AG04450 (cell line): ENCODE measurements at regions of chr13 and their contacts with region 1.

Region 1: DNA sequence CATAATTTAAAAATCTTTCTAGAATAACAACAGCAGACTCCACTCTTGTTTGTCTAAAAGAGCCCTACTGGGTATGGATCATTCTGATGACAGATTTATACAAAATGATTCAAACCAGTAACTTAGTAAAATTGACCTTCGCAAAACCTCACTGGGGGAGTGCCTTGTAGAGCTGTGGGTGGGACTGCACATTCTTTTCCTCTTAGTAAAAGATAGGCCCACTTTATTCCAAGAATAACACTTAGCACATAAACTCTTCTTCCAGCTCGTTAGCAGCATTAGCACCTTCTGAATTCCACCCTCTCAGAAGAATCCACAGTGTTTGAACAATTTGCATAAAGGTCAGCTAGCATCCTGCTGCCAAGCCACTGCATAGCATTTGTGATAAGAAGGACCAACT is 106.8 kb downstream of the STOML3 start:
- DNase-seq: no peak
- H3K4me3 ChIP-seq: no peak overlapping the region
- H3K27ac ChIP-seq: no peak overlapping the region
- H3K27me3 ChIP-seq: no peaks in the 10 kb centered on the region
- CTCF ChIP-seq: no peak

Region 2: GRCh38 chr13:38538422-38538821 is 345.4 kb before region 1 on chr13:
- CTCF ChIA-PET with region 1: no interaction called
- POLR2A ChIA-PET with region 1: no interaction called
- DNase-seq: no peak
- H3K4me3 ChIP-seq: no peak overlapping the region
- H3K27ac ChIP-seq: no peak overlapping the region
- H3K27me3 ChIP-seq: no peaks in the 10 kb centered on the region
- CTCF ChIP-seq: no peak

Region 3: DNA sequence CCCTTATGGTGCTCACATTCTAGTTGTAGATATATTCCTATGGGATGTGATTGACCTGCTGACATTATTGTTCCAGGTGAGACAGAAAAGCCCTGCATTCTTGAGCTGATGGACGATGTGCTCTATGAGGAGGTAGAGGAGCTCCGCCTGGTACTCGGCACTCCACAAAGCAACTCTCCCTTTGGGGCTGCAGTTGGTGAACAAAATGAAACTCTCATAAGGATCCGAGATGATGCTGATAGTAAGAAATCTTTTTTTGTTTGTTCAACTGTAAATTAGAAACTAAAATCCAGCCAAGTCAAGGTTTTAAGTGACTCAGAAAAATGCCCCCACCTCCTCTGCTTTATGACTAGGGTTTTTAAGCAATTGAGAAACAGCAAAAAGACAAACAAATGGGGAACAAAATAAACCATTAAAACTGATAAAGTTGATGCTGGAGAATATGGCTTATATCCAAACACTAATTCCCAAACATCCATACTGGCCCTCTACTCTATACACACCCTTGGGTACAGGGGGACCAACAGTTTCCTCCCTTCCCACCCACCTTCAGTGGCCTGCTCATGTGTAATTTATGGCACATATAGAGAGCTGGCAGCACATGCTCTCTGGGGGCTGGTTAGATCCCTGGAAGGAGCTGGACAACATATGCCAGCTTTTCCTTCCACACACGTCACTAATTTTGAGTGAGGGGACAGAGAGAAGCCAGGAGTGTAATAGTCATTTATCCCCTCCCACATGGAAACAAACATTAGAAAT is 32.7 kb before region 1 on chr13:
- CTCF ChIA-PET with region 1: no interaction called
- POLR2A ChIA-PET with region 1: no interaction called
- DNase-seq: no peak
- H3K4me3 ChIP-seq: no peak overlapping the region
- H3K27ac ChIP-seq: no peak overlapping the region
- H3K27me3 ChIP-seq: no peaks in the 10 kb centered on the region
- CTCF ChIP-seq: no peak

Region 4: GRCh38 chr13:38872693-38873092 is 11.1 kb before region 1 on chr13:
- CTCF ChIA-PET with region 1: interaction called, 16 read pairs
- POLR2A ChIA-PET with region 1: no interaction called
- DNase-seq: no peak
- H3K4me3 ChIP-seq: no peak overlapping the region
- H3K27ac ChIP-seq: no peak overlapping the region
- H3K27me3 ChIP-seq: no peaks in the 10 kb centered on the region
- CTCF ChIP-seq: peak; percentile 55